ENCODE measurements at regions of chrX and their contacts with region 1.

Region 1: DNA sequence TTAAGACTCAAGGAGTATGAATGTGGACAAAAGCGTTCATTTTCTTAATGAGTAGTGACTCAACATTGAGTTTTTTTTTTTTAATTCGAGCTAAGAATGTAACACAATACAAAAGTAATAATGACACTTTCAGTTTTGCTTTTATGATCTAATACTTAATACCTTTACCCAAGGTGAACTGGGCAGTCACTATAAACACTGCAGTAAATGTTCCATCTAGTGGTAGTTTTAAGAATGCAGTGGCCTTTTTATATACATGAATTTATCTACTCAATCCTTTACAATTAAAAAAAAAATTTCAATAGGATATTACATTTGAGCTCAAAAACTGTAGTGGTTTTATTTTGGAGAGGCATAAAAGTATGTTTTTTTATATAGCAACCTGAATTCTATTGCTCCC is 33.9 kb downstream of the PDK3 start:
- DNase-seq: no peak
- H3K4me3 ChIP-seq: no peak overlapping the region
- H3K27ac ChIP-seq: peak overlapping the region in 1 of 2 donors; percentile 11
- H3K4me1 ChIP-seq: no peaks in the 10 kb centered on the region
- H3K27me3 ChIP-seq: no peaks in the 10 kb centered on the region
- CTCF ChIP-seq: peak in 3 of 4 experiments; percentile 49 to 84 (median 75)
- POLR2A ChIP-seq: no peak

Region 2: DNA sequence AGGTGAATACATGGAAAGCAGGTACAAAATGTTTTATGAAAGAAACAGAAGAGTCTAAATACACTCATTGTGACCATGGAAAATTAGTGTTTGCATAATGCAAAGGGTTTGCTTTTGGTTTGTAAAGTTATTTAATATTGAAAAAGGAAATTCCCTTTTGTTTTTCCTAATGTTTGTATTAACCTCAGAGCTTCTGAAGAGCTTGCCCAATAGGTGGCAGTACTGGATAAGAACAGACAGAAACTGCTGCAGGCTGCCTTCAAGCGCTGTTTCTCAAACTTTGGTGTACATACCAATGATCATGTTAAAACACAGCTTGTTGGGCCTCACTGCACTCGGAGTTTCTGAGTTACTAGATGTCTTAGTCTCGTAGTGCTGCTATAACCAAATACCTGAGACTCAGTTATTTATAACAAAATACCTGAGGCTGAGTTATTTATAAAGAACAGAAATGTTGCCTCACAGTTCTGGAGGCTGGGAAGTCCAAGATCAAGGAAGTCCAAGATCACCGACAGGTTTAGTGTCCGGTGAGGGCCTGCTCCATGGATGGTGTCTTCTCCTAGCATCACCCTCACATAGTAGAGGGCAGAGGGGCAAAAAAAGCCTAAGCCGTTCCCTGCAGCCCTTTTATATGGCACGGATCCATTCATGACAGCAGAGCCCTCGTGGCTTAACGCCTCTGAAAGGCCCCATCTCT is 239.3 kb before region 1 on chrX:
- intact Hi-C with region 1: loop called (anchors 10 kb)
- DNase-seq: peak; percentile 20
- H3K4me3 ChIP-seq: no peak overlapping the region
- H3K27ac ChIP-seq: no peak overlapping the region
- H3K4me1 ChIP-seq: no peaks in the 10 kb centered on the region
- H3K27me3 ChIP-seq: no peaks in the 10 kb centered on the region
- CTCF ChIP-seq: peak in 3 of 4 experiments; percentile 24 to 49 (median 30)
- POLR2A ChIP-seq: no peak

Region 3: GRCh38 chrX:24380262-24381187 is 118.5 kb before region 1 on chrX:
- intact Hi-C with region 1: no loop called
- DNase-seq: no peak
- H3K4me3 ChIP-seq: no peak overlapping the region
- H3K27ac ChIP-seq: no peak overlapping the region
- H3K4me1 ChIP-seq: no peaks in the 10 kb centered on the region
- H3K27me3 ChIP-seq: no peaks in the 10 kb centered on the region
- CTCF ChIP-seq: no peak
- POLR2A ChIP-seq: no peak

Region 4: GRCh38 chrX:24395775-24396174 is 103.2 kb before region 1 on chrX:
- intact Hi-C with region 1: loop called (anchors 2 kb)
- DNase-seq: peak; percentile 51
- H3K4me3 ChIP-seq: no peak overlapping the region
- H3K27ac ChIP-seq: peak overlapping the region; percentile 38 to 42
- H3K4me1 ChIP-seq: no peaks in the 10 kb centered on the region
- H3K27me3 ChIP-seq: no peaks in the 10 kb centered on the region
- CTCF ChIP-seq: peak; percentile 43 to 88 (median 66)
- POLR2A ChIP-seq: no peak

Measured in prostate gland (tissue), 2 donors.